H1 (cell line): ENCODE measurements at regions of chr5 and their contacts with region 1.

Region 1: DNA sequence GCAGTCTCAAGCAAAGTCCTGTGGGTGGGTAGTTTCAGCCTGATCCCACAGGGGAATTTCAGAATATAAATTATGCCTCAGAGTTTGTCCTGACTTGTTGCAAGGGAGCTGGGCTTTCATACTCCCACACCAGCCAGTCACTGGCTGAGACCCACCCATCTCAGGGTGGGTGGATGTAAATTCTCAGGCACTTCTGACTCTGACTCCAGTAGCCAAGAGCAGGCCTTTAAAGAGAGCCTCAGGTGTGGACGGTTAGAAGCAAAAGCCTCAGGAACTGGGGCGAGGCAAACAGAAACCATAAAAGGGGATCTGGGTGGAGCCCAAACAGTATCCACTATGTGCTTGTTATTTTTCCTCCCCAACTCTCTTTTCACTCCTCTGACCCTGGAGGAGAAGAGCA is 28.6 kb upstream of the FBXW11 start:
- DNase-seq: no peak
- H3K4me3 ChIP-seq: no peak overlapping the region
- H3K27ac ChIP-seq: no peak overlapping the region
- H3K4me1 ChIP-seq: no peaks in the 10 kb centered on the region; a peak in 1 of 7 replicates
- H3K27me3 ChIP-seq: no peaks in the 10 kb centered on the region
- CTCF ChIP-seq: no peak
- EP300 ChIP-seq: no peak
- POLR2A ChIP-seq: no peak
- RAD21 ChIP-seq: no peak

Region 2: DNA sequence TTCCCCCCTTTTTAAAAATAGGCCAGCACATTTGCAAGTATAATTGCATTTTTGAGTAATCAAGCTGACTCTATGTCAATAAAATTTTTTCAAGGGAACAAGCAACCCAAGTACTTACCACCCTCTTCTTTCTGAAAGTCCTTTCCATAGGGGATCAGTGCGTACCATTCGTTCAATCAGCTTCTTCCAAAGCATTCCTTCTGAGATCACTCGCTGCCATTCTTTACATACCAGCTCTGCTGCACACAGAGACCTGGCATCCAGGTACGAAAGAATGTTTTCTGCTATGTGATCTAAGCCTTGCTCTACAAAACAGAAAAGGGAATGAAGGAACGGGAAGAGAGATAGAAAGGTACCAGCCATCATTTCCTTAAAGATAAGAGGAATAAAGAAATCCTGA is 135.2 kb before region 1 on chr5:
- CTCF ChIA-PET with region 1: interaction called, 11 read pairs
- POLR2A ChIA-PET with region 1: no interaction called
- DNase-seq: no peak
- H3K4me3 ChIP-seq: no peak overlapping the region
- H3K27ac ChIP-seq: no peak overlapping the region
- H3K4me1 ChIP-seq: peaks cover 0 to 4% (median 2%) of the 10 kb centered on the region in 4 experiments; a peak in 1 of 7 replicates
- H3K27me3 ChIP-seq: no peaks in the 10 kb centered on the region
- CTCF ChIP-seq: no peak
- EP300 ChIP-seq: no peak
- POLR2A ChIP-seq: no peak
- RAD21 ChIP-seq: no peak

Region 3: DNA sequence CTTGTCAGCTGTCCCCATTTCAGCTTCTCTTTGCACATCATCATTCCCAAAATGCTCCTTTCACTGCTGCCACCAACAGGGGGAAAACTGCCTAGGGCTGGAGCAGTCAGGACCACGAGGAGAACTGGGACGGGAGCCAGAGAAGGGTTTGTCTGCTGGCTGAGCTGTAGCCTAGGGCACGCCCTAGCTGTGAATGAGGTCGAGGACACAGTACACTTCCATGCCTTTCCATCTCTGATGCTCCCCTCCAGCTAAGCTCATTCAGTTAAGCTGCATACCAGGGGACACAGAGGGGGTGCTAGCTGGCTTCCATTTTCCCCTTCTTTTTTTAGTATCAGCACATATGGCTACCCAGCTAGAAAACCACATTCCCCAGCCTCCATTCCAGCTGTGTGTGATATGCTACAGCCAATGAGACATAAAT is 88.2 kb after region 1 on chr5:
- CTCF ChIA-PET with region 1: no interaction called
- POLR2A ChIA-PET with region 1: no interaction called
- DNase-seq: no peak
- H3K4me3 ChIP-seq: no peak overlapping the region
- H3K27ac ChIP-seq: no peak overlapping the region
- H3K4me1 ChIP-seq: no peaks in the 10 kb centered on the region; a peak in 1 of 7 replicates
- H3K27me3 ChIP-seq: no peaks in the 10 kb centered on the region
- CTCF ChIP-seq: peak; percentile 17 to 45 (median 22)
- EP300 ChIP-seq: no peak
- POLR2A ChIP-seq: no peak
- RAD21 ChIP-seq: peak in 1 of 2 experiments; percentile 26; a peak in 1 of 4 replicates

Region 4: GRCh38 chr5:172144291-172144815 is 109.3 kb after region 1 on chr5:
- CTCF ChIA-PET with region 1: no interaction called
- POLR2A ChIA-PET with region 1: no interaction called
- DNase-seq: no peak
- H3K4me3 ChIP-seq: no peak overlapping the region
- H3K27ac ChIP-seq: no peak overlapping the region
- H3K4me1 ChIP-seq: peaks cover 0 to 8% (median 5%) of the 10 kb centered on the region in 4 experiments; a peak in 5 of 7 replicates
- H3K27me3 ChIP-seq: no peaks in the 10 kb centered on the region
- CTCF ChIP-seq: no peak
- EP300 ChIP-seq: no peak
- POLR2A ChIP-seq: no peak
- RAD21 ChIP-seq: no peak